CD14-positive monocyte (primary cell): ENCODE measurements at regions of chr2 and their contacts with region 1.

Region 1: GRCh38 chr2:109545828-109546713 is 67.7 kb downstream of the SEPTIN10 start:
- DNase-seq: peak; percentile 22 to 36 (median 32)
- H3K4me3 ChIP-seq: no peak overlapping the region
- H3K4me3 Mint-ChIP-seq: no peak overlapping the region
- H3K27ac ChIP-seq: no peak overlapping the region
- H3K27ac Mint-ChIP-seq: peak overlapping the region in 1 of 7 donors; percentile 43
- H3K4me1 ChIP-seq: no peaks in the 10 kb centered on the region
- H3K4me1 Mint-ChIP-seq: no peaks in the 10 kb centered on the region
- H3K27me3 ChIP-seq: peaks cover 0 to 3% of the 10 kb centered on the region in 2 donors
- H3K27me3 Mint-ChIP-seq: peaks cover 1 to 16% (median 9%) of the 10 kb centered on the region in 3 donors
- CTCF ChIP-seq: peak; percentile 94

Region 2: DNA sequence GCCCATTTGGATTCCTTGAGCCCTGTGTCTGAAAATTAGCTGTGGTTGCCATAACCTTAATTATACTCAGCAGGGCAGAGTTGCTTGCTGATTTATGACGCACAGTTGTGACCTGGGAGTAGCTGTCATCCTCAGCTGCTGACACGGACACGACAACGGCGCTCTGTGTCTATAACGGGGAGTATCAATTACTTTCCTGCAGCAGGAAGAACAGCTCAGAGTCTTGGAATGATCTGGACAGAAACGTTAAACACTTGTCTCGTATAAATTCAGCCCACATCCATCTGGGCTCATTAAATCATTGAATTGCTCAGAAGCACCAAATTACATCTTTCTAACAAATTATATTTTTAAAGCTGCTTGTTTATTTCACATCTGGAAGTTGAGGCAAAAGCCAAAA is 48.6 kb before region 1 on chr2:
- intact Hi-C with region 1: no loop called
- DNase-seq: no peak
- H3K4me3 ChIP-seq: no peak overlapping the region
- H3K4me3 Mint-ChIP-seq: no peak overlapping the region
- H3K27ac ChIP-seq: no peak overlapping the region
- H3K27ac Mint-ChIP-seq: no peak overlapping the region
- H3K4me1 ChIP-seq: no peaks in the 10 kb centered on the region
- H3K4me1 Mint-ChIP-seq: no peaks in the 10 kb centered on the region
- H3K27me3 ChIP-seq: no peaks in the 10 kb centered on the region
- H3K27me3 Mint-ChIP-seq: peaks cover 0 to 1% (median under 1%) of the 10 kb centered on the region in 3 donors
- CTCF ChIP-seq: no peak

Region 3: GRCh38 chr2:109663721-109664120 is 117.7 kb after region 1 on chr2:
- intact Hi-C with region 1: loop called in 1 of 2 experiments (anchors 5 kb)
- DNase-seq: no peak
- H3K4me3 ChIP-seq: no peak overlapping the region
- H3K4me3 Mint-ChIP-seq: peak overlapping the region in 1 of 2 donors; percentile 19
- H3K27ac ChIP-seq: no peak overlapping the region
- H3K27ac Mint-ChIP-seq: no peak overlapping the region
- H3K4me1 ChIP-seq: no peaks in the 10 kb centered on the region
- H3K4me1 Mint-ChIP-seq: no peaks in the 10 kb centered on the region
- H3K27me3 ChIP-seq: peaks cover 5 to 7% of the 10 kb centered on the region in 2 donors
- H3K27me3 Mint-ChIP-seq: peaks cover 13 to 22% (median 20%) of the 10 kb centered on the region in 3 donors
- CTCF ChIP-seq: no peak

Region 4: DNA sequence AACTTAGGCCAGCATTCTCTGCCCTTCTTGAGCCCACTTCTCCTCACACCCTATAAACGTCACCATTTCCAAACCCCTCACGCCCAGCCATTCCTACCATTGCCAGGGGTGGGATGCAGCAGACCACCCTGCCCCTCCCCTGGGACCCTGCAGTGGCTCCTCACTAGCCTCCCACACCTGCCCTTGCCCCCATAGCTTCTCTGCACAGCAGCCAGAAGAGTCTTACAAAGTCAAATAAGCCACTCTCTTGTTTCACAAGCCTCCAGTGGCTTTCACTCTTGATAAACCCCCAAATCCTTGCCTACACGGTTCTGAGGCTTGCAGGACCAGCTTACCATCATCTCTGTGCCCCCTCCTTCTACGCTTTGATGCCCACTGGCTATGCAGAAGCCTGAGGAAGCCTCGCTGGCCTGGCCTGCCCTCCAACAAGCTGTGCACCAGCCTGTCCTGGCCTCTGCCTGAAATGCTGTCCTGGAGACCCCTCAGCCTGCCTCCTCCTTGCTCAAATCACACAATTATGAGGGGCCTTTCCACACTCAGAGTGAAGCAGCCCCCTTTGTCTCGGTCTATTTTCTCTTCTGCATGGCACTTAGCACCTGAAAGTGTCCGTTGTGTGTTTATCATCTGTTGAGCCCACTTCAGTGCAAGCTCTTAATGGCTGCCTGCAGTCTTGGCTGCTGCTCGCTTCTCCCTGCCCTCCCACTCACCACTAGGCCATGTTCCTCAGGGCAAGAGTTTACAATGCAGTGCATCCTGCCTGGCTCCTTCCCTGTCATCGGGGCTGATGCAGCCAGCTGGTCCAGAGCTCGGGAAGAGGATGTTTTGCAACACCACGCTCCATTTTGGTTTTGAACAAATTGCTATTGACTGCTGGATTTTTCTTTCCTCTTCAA is 165.4 kb after region 1 on chr2:
- intact Hi-C with region 1: loop called in 1 of 2 experiments (anchors 2 kb)
- DNase-seq: no peak
- H3K4me3 ChIP-seq: no peak overlapping the region
- H3K4me3 Mint-ChIP-seq: no peak overlapping the region
- H3K27ac ChIP-seq: no peak overlapping the region
- H3K27ac Mint-ChIP-seq: peak overlapping the region in 1 of 7 donors; percentile 54
- H3K4me1 ChIP-seq: no peaks in the 10 kb centered on the region
- H3K4me1 Mint-ChIP-seq: no peaks in the 10 kb centered on the region
- H3K27me3 ChIP-seq: no peaks in the 10 kb centered on the region
- H3K27me3 Mint-ChIP-seq: peaks cover 0 to 6% (median 2%) of the 10 kb centered on the region in 3 donors
- CTCF ChIP-seq: no peak

Region 5: DNA sequence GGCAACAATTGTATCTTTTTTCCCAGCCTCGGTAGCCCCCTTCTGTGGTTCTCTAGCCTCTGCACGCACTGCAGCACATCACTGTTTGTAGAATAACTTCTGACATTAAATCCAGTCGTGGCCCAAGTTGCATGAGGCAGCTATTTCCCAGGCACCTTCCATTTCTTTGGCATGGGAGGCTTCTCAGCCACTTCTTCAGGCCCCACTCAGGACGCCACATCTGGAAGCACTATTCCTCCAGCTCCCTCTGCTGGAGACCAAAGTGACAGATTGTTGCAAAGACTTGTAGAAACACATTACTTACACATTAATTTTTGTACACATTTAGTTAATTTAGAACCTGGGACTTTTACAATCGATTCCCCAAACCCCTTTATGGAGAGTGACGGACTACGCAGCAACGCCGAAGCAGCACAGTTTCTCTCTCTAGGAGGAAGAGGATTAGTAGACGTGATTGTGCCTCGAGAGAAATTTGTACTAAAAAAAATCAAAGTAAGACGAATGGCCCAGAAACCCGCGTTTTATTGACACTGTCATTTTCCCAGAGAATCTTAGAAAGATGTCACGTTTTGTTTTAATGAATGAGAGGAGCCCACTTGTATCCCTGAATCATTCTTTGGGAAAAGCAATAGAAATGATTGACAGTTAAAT is 190.2 kb after region 1 on chr2:
- intact Hi-C with region 1: loop called in 1 of 2 experiments (anchors 1 kb)
- DNase-seq: peak in 2 of 3 donors; percentile 6 to 15
- H3K4me3 ChIP-seq: no peak overlapping the region
- H3K4me3 Mint-ChIP-seq: no peak overlapping the region
- H3K27ac ChIP-seq: no peak overlapping the region
- H3K27ac Mint-ChIP-seq: no peak overlapping the region
- H3K4me1 ChIP-seq: no peaks in the 10 kb centered on the region
- H3K4me1 Mint-ChIP-seq: no peaks in the 10 kb centered on the region
- H3K27me3 ChIP-seq: no peaks in the 10 kb centered on the region
- H3K27me3 Mint-ChIP-seq: peaks cover 1 to 2% (median 2%) of the 10 kb centered on the region in 3 donors
- CTCF ChIP-seq: peak; percentile 62